ENCODE measurements at regions of chr3 and their contacts with region 1.

Region 1: GRCh38 chr3:42780892-42781700 is 8.0 kb upstream of the CCDC13 start:
- DNase-seq: no peak

Region 2: DNA sequence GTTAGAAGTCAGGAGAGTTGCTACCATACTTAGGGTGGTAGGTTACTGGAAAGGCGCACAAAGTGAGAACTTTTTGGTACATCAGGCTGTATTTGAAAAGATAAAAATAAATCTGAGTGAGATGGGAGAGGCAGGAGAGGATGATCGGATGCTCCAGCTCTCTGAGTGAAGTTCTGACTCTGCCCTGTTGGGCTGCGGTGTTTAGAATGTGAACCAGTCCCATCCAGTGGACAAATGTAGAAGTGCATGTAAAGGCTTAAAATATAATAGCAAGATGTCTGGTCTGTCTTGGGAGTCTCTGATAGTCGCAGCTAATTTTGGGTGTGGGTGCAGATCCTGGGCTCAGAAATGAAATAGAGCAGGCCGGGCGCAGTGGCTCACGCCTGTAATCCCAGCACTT is 58.5 kb after region 1 on chr3:
- intact Hi-C with region 1: loop called in 1 of 2 experiments (anchors 5 kb)
- DNase-seq: no peak

Region 3: GRCh38 chr3:42871592-42872196 is 90.6 kb after region 1 on chr3:
- intact Hi-C with region 1: loop called in 1 of 2 experiments (anchors 10 kb)
- DNase-seq: no peak

Region 4: DNA sequence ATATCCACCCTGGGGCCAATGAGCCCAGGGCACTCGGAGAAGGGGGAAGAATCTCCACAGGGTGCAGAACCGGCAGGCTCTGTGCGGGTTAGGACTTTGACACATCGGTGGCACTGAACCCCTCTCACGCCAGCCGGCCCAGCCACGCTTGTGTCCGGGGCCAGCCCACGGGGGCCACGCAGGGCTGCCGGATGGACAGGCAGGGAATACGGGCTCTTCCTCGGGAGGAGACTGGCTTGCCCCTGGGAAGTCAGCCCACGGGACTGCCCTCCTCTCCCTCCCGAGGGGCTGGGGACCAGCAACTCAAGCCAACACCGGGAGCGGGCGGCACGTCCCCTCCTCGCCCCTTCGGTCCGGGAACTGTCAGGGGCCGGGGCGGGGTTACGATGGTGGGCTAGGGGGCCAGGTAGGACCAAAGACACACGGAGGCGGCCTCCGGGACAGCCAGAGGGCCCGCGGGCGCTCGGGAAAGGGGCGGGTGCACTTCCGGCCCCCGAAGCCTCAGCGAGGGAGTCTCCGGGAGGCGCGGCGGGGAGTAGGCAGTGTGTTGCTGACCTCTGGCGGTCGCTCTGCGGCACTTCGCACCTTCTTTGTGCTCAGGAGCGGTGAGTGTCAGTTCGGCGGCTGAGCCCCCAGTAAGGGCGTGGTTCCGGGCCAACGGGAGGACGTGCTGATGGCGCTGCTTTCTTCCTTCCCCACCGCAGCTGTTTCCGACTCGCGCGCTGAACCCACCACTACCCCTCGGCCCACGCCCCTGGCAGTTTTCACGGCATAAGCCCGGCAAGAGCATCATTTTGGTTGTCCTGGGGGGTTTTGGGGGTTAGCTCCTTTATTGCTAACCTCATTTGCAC is 99.7 kb after region 1 on chr3:
- intact Hi-C with region 1: loop called (anchors 5 to 10 kb)
- DNase-seq: peak; percentile 96

Region 5: DNA sequence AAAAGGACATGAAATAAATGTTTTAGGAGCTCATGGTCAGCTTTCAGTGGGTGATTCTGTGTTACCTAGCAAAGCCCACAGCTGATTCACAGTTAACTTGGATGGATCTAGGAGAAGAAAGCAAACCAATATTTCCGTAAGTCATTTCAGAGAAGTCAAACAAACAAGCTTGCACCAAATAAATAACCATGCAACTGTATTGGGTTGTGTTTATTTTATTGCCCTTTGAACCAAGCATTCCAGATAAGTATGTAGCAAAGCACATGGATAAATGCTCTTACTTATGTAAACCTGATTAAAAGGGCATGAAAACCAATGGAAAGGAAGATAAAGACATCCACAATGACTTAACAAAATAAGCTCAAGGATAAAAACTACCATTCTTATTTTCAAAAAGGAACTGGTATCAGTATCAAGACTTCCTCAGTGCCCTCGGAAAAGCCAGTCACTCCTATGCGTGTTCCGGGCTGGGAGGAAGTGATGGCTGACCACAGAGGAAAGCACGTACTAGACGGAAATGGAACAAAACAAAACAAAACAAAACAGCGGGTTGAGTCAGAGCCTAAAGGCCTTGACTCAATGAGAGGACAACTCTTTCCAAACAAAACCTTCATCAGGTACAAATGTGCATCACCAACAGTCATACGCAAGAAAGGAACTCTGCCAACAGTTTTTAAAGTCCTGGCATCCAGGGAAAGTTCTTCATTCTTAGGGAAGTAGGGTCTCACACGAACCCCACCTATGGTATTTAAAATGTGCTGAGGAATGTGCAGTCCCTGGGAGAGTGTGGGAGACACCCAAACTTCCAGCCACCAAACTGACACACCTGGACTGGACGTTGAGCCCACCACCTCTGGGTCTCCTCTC is 608.5 kb after region 1 on chr3:
- intact Hi-C with region 1: no loop called
- DNase-seq: no peak